ENCODE measurements at regions of chr2 and their contacts with region 1.

Region 1: DNA sequence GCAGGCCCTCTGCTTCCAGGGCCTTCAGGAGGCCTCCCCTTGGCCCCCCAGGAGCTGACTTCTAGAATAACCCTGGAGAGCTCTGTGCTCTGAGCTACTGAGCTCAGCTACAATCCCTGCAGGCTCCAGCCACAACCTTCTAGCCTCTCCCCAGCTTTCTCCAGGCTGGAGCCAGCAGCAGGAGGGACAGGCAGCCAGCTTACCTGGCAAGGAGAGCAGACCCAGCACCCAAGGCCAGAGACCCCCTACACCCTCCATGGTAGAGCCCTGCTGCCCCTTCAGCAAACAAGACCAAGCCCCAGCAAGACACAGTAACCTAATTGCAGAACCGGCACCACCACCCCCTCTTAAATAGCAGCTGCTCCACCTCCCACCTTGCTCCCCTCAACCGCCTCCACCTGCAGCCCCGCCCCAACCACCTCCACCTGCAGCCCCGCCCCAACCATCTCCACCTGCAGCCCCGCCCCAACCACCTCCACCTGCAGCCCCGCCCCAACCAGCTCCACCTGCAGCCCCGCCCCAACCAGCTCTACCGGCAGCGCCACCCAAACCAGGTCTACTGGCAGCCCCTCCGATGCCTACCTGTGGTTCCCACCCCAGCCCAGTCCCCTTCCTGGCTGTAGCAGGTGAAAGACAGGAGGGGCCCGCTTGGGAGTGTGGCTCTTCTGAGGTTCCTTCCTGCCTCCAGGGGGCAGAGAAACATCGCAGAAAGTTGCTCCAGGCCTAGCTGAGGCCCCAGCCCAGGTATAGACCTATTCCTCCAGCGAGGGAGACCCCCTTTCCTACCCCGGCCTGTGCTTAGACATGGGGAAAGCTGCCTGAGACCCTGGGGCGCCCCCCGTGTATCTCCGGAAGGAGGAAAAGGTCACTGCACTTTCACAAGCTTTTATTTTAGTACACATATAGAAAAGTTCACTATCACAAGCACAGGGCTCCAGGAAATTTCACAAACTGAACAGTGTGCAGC is at the start of gene ASTL:
- DNase-seq: peak; percentile 19
- H3K4me3 ChIP-seq: no peak within 1 kb of the TSS
- H3K27ac ChIP-seq: no peak within 1 kb of the TSS
- H3K4me1 ChIP-seq: no peaks in the 10 kb centered on the region
- H3K27me3 ChIP-seq: peaks cover 0 to 3% of the 10 kb centered on the region in 2 experiments
- CTCF ChIP-seq: peak; percentile 26 to 68
- POLR2A ChIP-seq: no peak
- total RNA-seq, gene ASTL: not detected in 2 replicates

Region 2: DNA sequence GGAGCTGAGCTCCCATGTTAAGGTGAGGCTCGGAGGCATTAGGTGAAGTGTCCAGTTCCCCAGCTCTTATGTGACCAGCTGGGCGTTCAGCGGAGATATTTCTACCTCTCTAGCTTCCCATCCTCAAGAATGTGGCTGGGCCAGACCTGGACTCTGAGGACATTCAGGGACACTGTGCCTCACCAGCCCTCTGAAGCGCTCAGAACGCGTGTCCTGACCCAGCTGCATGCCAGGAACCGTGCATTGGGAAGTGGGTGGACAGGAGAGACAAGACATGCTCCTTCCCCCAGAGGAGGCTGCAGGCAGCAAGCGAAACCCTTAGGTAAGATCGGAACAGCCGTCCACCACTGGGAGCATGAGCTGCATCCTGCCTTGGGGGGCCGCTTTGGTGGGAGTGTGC is 65.7 kb before region 1 on chr2:
- CTCF ChIA-PET with region 1: no interaction called
- POLR2A ChIA-PET with region 1: no interaction called
- dilution Hi-C with region 1: no loop called
- intact Hi-C with region 1: no loop called
- DNase-seq: no peak
- H3K4me3 ChIP-seq: no peak overlapping the region
- H3K27ac ChIP-seq: no peak overlapping the region
- H3K4me1 ChIP-seq: no peaks in the 10 kb centered on the region
- H3K27me3 ChIP-seq: peaks cover 2 to 12% of the 10 kb centered on the region in 2 experiments
- CTCF ChIP-seq: no peak
- POLR2A ChIP-seq: no peak

Region 3: DNA sequence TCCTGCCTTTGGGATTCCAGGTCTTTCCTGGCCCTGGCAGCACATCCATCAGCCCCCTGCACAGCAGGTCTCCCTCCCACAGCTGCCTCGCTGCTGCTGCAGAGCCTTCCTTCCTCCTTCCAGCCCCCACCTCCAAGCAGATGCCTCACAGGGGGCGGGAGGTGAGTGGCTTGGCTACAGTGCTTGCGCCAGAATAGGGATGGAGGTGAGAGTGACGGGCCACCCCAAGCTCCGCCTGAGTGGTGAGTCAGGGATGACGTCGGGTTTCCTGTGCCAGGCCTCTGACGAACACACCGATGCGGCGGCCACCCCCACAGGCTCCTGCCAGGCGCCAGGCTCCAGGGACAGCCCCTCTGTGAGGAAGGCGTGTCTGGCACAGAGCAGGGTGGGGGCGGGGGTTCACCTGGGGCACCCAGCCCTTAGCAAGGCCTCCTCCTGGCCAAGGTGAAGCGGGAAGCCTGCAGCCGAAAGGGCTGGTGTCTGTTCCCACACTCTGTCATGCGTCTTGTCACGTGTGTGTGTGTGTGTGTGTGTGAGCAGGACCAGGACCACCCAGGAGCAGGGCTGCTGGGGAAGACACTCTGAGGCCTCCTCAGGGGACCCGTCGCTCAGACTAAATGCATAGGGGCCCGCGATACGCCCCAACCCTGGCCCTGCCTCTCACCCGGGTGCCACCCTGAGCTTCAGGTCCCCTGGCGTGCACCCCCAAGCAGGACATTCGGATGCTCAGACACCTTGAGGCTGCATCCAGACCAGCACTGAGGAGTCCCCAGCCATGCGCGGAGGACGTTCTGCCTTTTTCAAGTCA is 10.2 kb after region 1 on chr2:
- CTCF ChIA-PET with region 1: interaction called, 15 read pairs
- POLR2A ChIA-PET with region 1: no interaction called
- dilution Hi-C with region 1: no loop called
- intact Hi-C with region 1: no loop called
- DNase-seq: peak; percentile 74
- H3K4me3 ChIP-seq: no peak overlapping the region
- H3K27ac ChIP-seq: peak overlapping the region; percentile 16
- H3K4me1 ChIP-seq: no peaks in the 10 kb centered on the region
- H3K27me3 ChIP-seq: no peaks in the 10 kb centered on the region
- CTCF ChIP-seq: no peak
- POLR2A ChIP-seq: no peak

Region 4: DNA sequence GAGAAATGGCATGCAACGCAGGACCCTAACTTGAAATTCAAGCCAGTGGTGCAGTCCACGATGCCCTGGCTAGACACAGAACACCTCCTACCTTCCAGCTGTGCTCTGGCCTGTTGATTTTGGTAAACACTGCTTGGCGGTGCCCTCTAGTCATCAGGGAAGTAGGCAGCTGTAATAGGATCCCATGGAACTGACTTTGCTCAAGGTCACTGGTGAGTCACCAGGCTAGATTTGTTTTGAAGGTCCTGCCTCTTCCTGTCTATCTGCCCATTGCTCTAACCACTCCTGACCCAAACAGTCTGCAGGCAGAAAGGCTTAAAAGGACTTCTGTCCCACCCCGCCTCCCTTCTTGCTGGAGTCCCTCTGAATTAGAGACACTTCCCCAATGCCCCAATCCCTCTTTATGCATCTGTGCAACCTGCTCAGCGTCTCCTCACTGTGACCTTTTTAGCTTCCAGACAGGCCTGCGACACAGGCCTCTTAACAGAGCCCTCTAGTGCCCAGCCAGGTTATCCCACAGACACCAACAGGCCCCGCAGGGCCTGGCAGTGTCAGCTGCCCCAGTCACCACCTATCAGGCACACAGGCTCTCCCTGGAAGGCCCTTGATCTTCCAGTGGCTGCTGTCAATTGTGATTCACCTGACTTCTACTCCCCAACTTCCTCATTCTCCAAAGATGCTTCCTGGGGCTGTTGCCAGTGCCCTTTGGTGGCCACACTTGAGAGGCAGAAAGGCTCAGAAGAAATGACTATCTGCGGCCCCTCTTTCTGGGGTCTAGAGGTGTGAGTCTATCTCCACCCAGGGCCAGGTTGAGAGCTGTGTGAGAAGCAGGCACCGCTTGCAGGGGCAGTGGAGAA is 122.2 kb after region 1 on chr2:
- CTCF ChIA-PET with region 1: interaction called, 32 read pairs
- POLR2A ChIA-PET with region 1: no interaction called
- dilution Hi-C with region 1: no loop called
- intact Hi-C with region 1: no loop called
- DNase-seq: peak; percentile 94
- H3K4me3 ChIP-seq: no peak overlapping the region
- H3K27ac ChIP-seq: peak overlapping the region; percentile 76
- H3K4me1 ChIP-seq: peaks cover 47% of the 10 kb centered on the region
- H3K27me3 ChIP-seq: no peaks in the 10 kb centered on the region
- CTCF ChIP-seq: peak; percentile 42 to 65
- POLR2A ChIP-seq: no peak

Measured in endothelial cell of umbilical vein (primary cell).